Activated CD8-positive, alpha-beta T cell treated with anti-CD3 and anti-CD28 coated beads for 36 hours (primary cell): ENCODE measurements at regions of chr22 and their contacts with region 1.

Region 1: GRCh38 chr22:44735540-44736488 is 16.6 kb upstream of the ARHGAP8 start:
- DNase-seq: peak; percentile 92
- ATAC-seq: peak; percentile 83
- H3K4me3 Mint-ChIP-seq: no peak overlapping the region
- H3K27ac Mint-ChIP-seq: no peak overlapping the region
- H3K4me1 Mint-ChIP-seq: no peaks in the 10 kb centered on the region
- H3K27me3 Mint-ChIP-seq: no peaks in the 10 kb centered on the region
- CTCF ChIP-seq: peak; percentile 96

Region 2: DNA sequence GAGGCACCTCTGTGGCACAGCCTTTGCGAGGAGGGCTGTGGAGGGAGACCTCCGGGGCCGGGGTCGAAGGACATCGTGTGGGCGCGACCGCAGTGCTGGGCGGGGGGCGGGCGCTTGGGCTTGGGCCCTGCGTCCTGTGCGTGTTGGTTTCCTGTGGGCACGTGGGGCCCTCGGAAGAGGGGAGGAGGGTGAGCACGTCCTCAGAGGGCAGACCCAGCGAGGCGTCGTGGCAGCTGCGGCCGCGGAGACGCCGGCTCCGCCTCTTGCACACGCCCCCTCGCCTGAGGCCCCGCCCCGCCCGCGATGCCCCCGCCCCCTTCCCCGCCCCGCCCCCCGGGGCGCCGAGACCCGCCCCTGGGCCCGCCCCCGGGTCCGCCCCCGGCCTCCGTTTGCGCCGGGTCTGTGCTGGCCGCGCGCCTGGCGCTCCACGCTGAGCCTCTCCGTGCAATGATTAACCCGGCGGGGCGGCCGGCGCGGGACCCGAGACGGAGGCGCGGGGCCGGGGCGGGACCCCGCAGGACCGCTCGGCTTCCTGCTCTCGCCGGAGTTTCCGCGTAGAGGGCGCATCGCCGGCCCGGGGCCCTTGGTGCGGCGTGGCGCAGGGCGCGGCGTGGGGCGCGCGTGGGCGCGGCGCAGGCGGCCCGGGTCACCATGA is 33.9 kb before region 1 on chr22 and contains the start of gene PRR5:
- CTCF ChIA-PET with region 1: interaction called, 46 read pairs
- POLR2A ChIA-PET with region 1: interaction called, 3 read pairs
- intact Hi-C with region 1: loop called (anchors 2 kb)
- DNase-seq: peak; percentile 91
- ATAC-seq: peak; percentile 92
- H3K4me3 Mint-ChIP-seq: peak within 1 kb of the TSS; percentile 74
- H3K27ac Mint-ChIP-seq: peak within 1 kb of the TSS; percentile 86
- H3K4me1 Mint-ChIP-seq: peaks cover 41% of the 10 kb centered on the region
- H3K27me3 Mint-ChIP-seq: no peaks in the 10 kb centered on the region
- CTCF ChIP-seq: no peak
- total RNA-seq, gene PRR5: 26.8 to 27.3 TPM

Region 3: DNA sequence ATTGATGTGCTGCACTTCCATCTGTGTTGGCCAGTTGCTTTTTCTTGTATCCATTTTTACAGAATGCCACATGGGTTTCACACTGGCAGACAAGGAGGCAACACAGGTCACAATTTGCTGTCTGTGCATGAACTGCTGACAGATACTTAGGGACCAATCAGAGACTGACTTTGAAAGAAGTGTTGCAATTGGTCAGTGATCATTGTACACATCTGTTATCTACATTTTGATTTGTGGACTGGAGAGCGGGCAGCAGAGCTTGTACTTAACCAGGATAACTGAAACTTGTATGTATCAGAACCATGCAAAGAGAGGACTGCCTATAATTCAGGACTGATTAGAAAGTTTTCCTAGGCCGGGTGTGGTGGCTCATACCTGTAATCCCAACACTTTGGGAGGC is 12.0 kb before region 1 on chr22:
- CTCF ChIA-PET with region 1: interaction called, 11 read pairs
- POLR2A ChIA-PET with region 1: interaction called, 3 read pairs
- intact Hi-C with region 1: no loop called
- DNase-seq: no peak
- ATAC-seq: peak; percentile 44
- H3K4me3 Mint-ChIP-seq: no peak overlapping the region
- H3K27ac Mint-ChIP-seq: no peak overlapping the region
- H3K4me1 Mint-ChIP-seq: peaks cover 17% of the 10 kb centered on the region
- H3K27me3 Mint-ChIP-seq: no peaks in the 10 kb centered on the region
- CTCF ChIP-seq: no peak